RWPE1 (cell line): ENCODE measurements at regions of chrX and their contacts with region 1.

Region 1: GRCh38 chrX:5898463-5898862 is 330.2 kb downstream of the NLGN4X start:
- DNase-seq: no peak
- H3K27ac ChIP-seq: no peak overlapping the region
- CTCF ChIP-seq: no peak

Region 2: GRCh38 chrX:5916945-5917344 is 18.5 kb after region 1 on chrX:
- CTCF ChIA-PET with region 1: no interaction called
- POLR2A ChIA-PET with region 1: no interaction called
- DNase-seq: no peak
- H3K27ac ChIP-seq: no peak overlapping the region
- CTCF ChIP-seq: no peak

Region 3: GRCh38 chrX:7215842-7216241 is 1317.4 kb after region 1 on chrX:
- CTCF ChIA-PET with region 1: no interaction called
- POLR2A ChIA-PET with region 1: no interaction called
- DNase-seq: no peak
- H3K27ac ChIP-seq: no peak overlapping the region
- CTCF ChIP-seq: no peak

Region 4: GRCh38 chrX:7435822-7436221 is 1537.4 kb after region 1 on chrX:
- CTCF ChIA-PET with region 1: no interaction called
- POLR2A ChIA-PET with region 1: interaction called, 13 read pairs
- DNase-seq: no peak
- H3K27ac ChIP-seq: no peak overlapping the region
- CTCF ChIP-seq: no peak